ENCODE measurements at regions of chr17 and their contacts with region 1.

Region 1: GRCh38 chr17:3865176-3865575 is 19.1 kb upstream of the NCBP3 start:
- DNase-seq: no peak
- ATAC-seq: no peak
- H3K4me3 Mint-ChIP-seq: no peak overlapping the region
- H3K27ac Mint-ChIP-seq: no peak overlapping the region
- H3K4me1 Mint-ChIP-seq: no peaks in the 10 kb centered on the region
- H3K27me3 Mint-ChIP-seq: no peaks in the 10 kb centered on the region

Region 2: GRCh38 chr17:3827124-3827773 is 37.9 kb before region 1 on chr17:
- CTCF ChIA-PET with region 1: no interaction called
- DNase-seq: peak; percentile 83
- ATAC-seq: peak; percentile 47
- H3K4me3 Mint-ChIP-seq: no peak overlapping the region
- H3K27ac Mint-ChIP-seq: no peak overlapping the region
- H3K4me1 Mint-ChIP-seq: peaks cover 19% of the 10 kb centered on the region
- H3K27me3 Mint-ChIP-seq: no peaks in the 10 kb centered on the region

Region 3: DNA sequence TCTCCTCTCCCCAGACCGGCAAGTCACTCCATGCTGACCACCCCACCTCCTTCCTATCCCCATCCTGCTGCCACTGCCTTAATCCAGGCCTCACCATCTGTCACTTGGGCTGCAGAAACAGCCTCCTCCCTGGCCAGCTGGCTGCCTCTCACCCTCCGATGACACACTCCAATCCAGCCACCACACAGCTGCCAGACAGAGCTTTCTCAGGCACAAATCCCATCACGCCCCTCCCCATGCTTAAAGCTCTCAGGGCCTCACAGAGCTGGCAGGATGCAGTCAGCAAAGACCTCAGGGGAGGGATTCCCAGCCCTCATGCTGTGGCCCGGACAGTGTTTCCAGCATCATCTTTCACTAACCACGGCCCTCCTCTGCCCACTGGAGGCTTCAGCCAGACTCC is 14.0 kb after region 1 on chr17:
- CTCF ChIA-PET with region 1: interaction called, 13 read pairs
- DNase-seq: no peak
- ATAC-seq: no peak
- H3K4me3 Mint-ChIP-seq: no peak overlapping the region
- H3K27ac Mint-ChIP-seq: no peak overlapping the region
- H3K4me1 Mint-ChIP-seq: no peaks in the 10 kb centered on the region
- H3K27me3 Mint-ChIP-seq: no peaks in the 10 kb centered on the region

Region 4: GRCh38 chr17:3893003-3893719 is 28.0 kb after region 1 on chr17 and contains the start of gene CAMKK1:
- CTCF ChIA-PET with region 1: interaction called, 15 read pairs
- DNase-seq: peak; percentile 91
- ATAC-seq: peak; percentile 92
- H3K4me3 Mint-ChIP-seq: peak within 1 kb of the TSS; percentile 73
- H3K27ac Mint-ChIP-seq: peak within 1 kb of the TSS; percentile 68
- H3K4me1 Mint-ChIP-seq: peaks cover 23% of the 10 kb centered on the region
- H3K27me3 Mint-ChIP-seq: peaks cover 7% of the 10 kb centered on the region
- total RNA-seq, gene CAMKK1: 1.8 TPM

Measured in activated CD8-positive, alpha-beta memory T cell treated with anti-CD3 and anti-CD28 coated beads, Interleukin-2, amount 10 ng/mL, durations not matched to agents 7 days and 5 days (primary cell).